Activated B cell treated with CpG ODN at 0.5 μM for 24 hours (primary cell): ENCODE measurements at regions of chr20 and their contacts with region 1.

Region 1: GRCh38 chr20:15708984-15709598 is 864.2 kb downstream of the KIF16B start:
- DNase-seq: peak; percentile 55
- ATAC-seq: peak; percentile 78
- H3K4me3 Mint-ChIP-seq: no peak overlapping the region
- H3K27ac Mint-ChIP-seq: no peak overlapping the region
- H3K4me1 Mint-ChIP-seq: peaks cover 4% of the 10 kb centered on the region
- H3K27me3 Mint-ChIP-seq: no peaks in the 10 kb centered on the region
- CTCF ChIP-seq: no peak

Region 2: GRCh38 chr20:15406072-15406471 is 303.0 kb before region 1 on chr20:
- CTCF ChIA-PET with region 1: no interaction called
- POLR2A ChIA-PET with region 1: no interaction called
- intact Hi-C with region 1: no loop called
- DNase-seq: no peak
- ATAC-seq: no peak
- H3K4me3 Mint-ChIP-seq: no peak overlapping the region
- H3K27ac Mint-ChIP-seq: no peak overlapping the region
- H3K4me1 Mint-ChIP-seq: no peaks in the 10 kb centered on the region
- H3K27me3 Mint-ChIP-seq: no peaks in the 10 kb centered on the region
- CTCF ChIP-seq: no peak

Region 3: GRCh38 chr20:15682690-15683089 is 26.4 kb before region 1 on chr20:
- CTCF ChIA-PET with region 1: no interaction called
- POLR2A ChIA-PET with region 1: no interaction called
- intact Hi-C with region 1: no loop called
- DNase-seq: no peak
- ATAC-seq: no peak
- H3K4me3 Mint-ChIP-seq: no peak overlapping the region
- H3K27ac Mint-ChIP-seq: no peak overlapping the region
- H3K4me1 Mint-ChIP-seq: no peaks in the 10 kb centered on the region
- H3K27me3 Mint-ChIP-seq: no peaks in the 10 kb centered on the region
- CTCF ChIP-seq: no peak

Region 4: GRCh38 chr20:15842872-15843271 is 133.8 kb after region 1 on chr20:
- CTCF ChIA-PET with region 1: interaction called, 4 read pairs
- POLR2A ChIA-PET with region 1: no interaction called
- intact Hi-C with region 1: loop called (anchors 1 kb)
- DNase-seq: no peak
- ATAC-seq: peak; percentile 90
- H3K4me3 Mint-ChIP-seq: no peak overlapping the region
- H3K27ac Mint-ChIP-seq: peak overlapping the region; percentile 21
- H3K4me1 Mint-ChIP-seq: peaks cover 13% of the 10 kb centered on the region
- H3K27me3 Mint-ChIP-seq: no peaks in the 10 kb centered on the region
- CTCF ChIP-seq: no peak

Region 5: GRCh38 chr20:15902493-15902892 is 193.4 kb after region 1 on chr20:
- CTCF ChIA-PET with region 1: interaction called, 4 read pairs
- POLR2A ChIA-PET with region 1: no interaction called
- intact Hi-C with region 1: loop called (anchors 1 kb)
- DNase-seq: no peak
- ATAC-seq: no peak
- H3K4me3 Mint-ChIP-seq: no peak overlapping the region
- H3K27ac Mint-ChIP-seq: no peak overlapping the region
- H3K4me1 Mint-ChIP-seq: no peaks in the 10 kb centered on the region
- H3K27me3 Mint-ChIP-seq: no peaks in the 10 kb centered on the region
- CTCF ChIP-seq: no peak

Region 6: DNA sequence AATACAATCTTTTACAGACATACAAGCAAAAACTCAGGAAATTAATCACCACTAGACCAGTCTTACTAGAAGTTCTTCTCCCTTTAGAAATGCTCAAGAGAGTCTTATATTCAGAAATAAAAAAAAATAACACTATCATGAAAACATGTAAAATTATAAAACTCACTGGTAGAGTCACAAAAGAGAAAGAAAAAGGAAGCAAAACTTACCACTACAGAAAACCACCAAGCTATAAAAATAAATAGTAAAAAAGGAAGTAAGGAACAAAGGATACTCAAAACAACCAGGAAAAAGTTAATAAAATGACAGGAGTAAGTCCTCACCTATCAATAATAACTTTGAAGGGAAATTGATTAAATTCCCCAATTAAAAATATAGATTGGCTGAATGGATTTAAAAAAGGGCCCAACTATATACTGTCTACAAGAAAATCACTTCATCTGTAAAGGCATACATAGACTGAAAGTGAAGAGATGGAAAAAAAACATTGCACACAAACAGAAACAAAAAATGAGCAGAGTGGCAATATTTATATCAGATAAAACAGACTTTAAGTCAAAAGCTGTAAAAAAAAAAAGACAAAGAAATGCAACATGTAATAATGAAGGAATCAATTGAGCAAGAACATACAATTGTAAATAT is 374.7 kb after region 1 on chr20:
- CTCF ChIA-PET with region 1: no interaction called
- POLR2A ChIA-PET with region 1: no interaction called
- intact Hi-C with region 1: no loop called
- DNase-seq: no peak
- ATAC-seq: no peak
- H3K4me3 Mint-ChIP-seq: peak overlapping the region; percentile 20
- H3K27ac Mint-ChIP-seq: peak overlapping the region; percentile 75
- H3K4me1 Mint-ChIP-seq: peaks cover 56% of the 10 kb centered on the region
- H3K27me3 Mint-ChIP-seq: no peaks in the 10 kb centered on the region
- CTCF ChIP-seq: no peak

Region 7: DNA sequence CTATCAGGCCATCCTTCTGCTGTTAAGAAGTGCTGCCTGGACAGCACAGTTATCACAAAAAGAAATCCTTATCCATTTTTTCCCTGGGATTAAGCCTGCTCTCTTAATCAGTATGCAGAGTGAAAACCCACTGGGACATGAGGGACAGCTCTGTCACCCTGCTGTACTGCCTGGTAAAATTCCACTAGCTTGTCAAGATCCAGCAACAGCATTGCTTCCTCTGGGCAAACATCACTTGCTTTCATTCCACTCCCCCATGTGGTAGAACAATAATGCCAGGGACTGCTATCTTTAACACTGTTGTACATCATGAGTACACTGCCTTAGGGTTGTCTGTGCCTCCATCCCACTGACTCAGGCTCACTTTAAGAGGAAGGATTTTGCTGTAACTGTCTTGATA is 532.8 kb after region 1 on chr20:
- CTCF ChIA-PET with region 1: interaction called, 5 read pairs
- POLR2A ChIA-PET with region 1: no interaction called
- intact Hi-C with region 1: loop called (anchors 1 kb)
- DNase-seq: no peak
- ATAC-seq: no peak
- H3K4me3 Mint-ChIP-seq: no peak overlapping the region
- H3K27ac Mint-ChIP-seq: no peak overlapping the region
- H3K4me1 Mint-ChIP-seq: peaks cover 9% of the 10 kb centered on the region
- H3K27me3 Mint-ChIP-seq: peaks cover 3% of the 10 kb centered on the region
- CTCF ChIP-seq: no peak

Region 8: DNA sequence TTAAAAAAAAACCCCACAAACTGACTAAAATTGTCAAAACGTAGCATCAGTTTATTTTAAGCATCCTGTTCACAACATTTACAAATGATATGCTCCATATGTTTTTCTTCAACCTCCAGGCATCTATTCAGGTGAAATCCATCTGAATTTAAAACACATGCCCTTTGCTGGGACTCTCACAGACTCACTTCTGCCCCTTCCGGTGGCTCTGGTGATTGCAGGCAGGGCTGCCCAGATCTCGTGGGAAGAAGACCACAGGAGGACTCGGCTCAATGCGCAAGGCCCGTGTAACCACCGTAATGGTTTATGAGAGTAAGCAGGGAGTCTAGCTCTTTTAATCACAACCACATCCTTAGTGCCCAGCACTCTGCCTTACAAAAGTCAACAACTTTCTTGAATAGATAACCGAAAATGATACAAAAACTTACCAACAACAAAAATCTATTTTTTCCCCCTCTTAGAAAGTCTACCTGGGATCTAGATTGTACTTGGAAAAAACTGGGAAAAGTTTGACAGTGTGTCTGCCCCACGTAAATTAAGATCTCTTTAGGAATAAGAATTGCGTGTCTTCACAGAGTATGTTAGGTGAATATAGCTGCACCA is 725.1 kb after region 1 on chr20:
- CTCF ChIA-PET with region 1: no interaction called
- POLR2A ChIA-PET with region 1: no interaction called
- intact Hi-C with region 1: loop called (anchors 1 kb)
- DNase-seq: peak; percentile 48
- ATAC-seq: peak; percentile 91
- H3K4me3 Mint-ChIP-seq: no peak overlapping the region
- H3K27ac Mint-ChIP-seq: no peak overlapping the region
- H3K4me1 Mint-ChIP-seq: peaks cover 5% of the 10 kb centered on the region
- H3K27me3 Mint-ChIP-seq: no peaks in the 10 kb centered on the region
- CTCF ChIP-seq: no peak